ENCODE measurements at regions of chr15 and their contacts with region 1.

Region 1: DNA sequence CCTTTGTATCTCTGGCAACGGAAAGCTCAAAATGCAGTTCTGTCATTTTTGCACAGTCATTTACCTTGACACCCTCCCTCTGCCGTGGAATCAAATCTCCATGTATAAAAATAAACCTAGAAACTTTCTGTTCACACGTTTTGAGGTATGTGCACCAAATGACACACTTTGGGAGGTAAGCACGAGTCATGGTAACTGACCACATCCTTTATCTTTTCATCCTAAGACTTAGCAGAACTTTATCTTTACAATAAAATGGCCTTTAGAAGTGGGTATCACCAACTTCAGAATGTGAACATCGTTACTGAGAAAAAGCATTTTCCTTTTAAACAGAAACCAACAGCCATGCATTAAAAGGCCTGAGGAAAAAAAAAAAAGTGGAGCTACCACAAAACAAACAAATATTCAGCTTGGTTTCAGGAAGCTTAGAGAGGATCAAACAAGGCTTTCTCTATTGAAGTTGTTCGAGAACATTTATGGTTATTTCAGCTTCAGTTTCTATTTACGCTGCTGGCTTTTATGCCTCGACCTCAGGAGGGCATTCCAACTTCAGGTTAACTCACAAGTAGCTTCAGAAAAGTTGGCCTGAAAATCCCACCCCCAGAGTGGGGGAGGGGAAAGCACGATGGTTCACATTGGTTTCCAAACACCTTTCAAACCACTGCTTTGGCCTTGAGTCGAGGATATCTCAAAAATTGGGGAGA is 171.1 kb upstream of the ICE2 start:
- DNase-seq: no peak
- H3K4me3 ChIP-seq: no peak overlapping the region
- H3K27ac ChIP-seq: no peak overlapping the region
- H3K4me1 ChIP-seq: no peaks in the 10 kb centered on the region
- H3K27me3 ChIP-seq: no peaks in the 10 kb centered on the region
- CTCF ChIP-seq: no peak
- POLR2A ChIP-seq: no peak

Region 2: GRCh38 chr15:60614862-60615771 is 34.9 kb before region 1 on chr15:
- intact Hi-C with region 1: no loop called
- DNase-seq: no peak
- H3K4me3 ChIP-seq: no peak overlapping the region
- H3K27ac ChIP-seq: no peak overlapping the region
- H3K4me1 ChIP-seq: no peaks in the 10 kb centered on the region
- H3K27me3 ChIP-seq: no peaks in the 10 kb centered on the region
- CTCF ChIP-seq: no peak
- POLR2A ChIP-seq: no peak

Region 3: GRCh38 chr15:60695713-60696522 is 45.9 kb after region 1 on chr15:
- intact Hi-C with region 1: loop called (anchors 10 kb)
- DNase-seq: no peak
- H3K4me3 ChIP-seq: no peak overlapping the region
- H3K27ac ChIP-seq: no peak overlapping the region
- H3K4me1 ChIP-seq: no peaks in the 10 kb centered on the region
- H3K27me3 ChIP-seq: no peaks in the 10 kb centered on the region
- CTCF ChIP-seq: no peak
- POLR2A ChIP-seq: no peak